Calu3 (cell line): ENCODE measurements at regions of chr6 and their contacts with region 1.

Region 1: GRCh38 chr6:77740380-77740779 is 87.5 kb downstream of the MEI4 start:
- DNase-seq: no peak
- H3K4me3 Mint-ChIP-seq: no peak overlapping the region
- H3K27ac Mint-ChIP-seq: no peak overlapping the region
- H3K4me1 Mint-ChIP-seq: no peaks in the 10 kb centered on the region
- H3K27me3 Mint-ChIP-seq: no peaks in the 10 kb centered on the region
- CTCF ChIP-seq: peak; percentile 31

Region 2: GRCh38 chr6:77796824-77797809 is 56.7 kb after region 1 on chr6:
- CTCF ChIA-PET with region 1: no interaction called
- intact Hi-C with region 1: no loop called
- DNase-seq: no peak
- H3K4me3 Mint-ChIP-seq: no peak overlapping the region
- H3K27ac Mint-ChIP-seq: no peak overlapping the region
- H3K4me1 Mint-ChIP-seq: no peaks in the 10 kb centered on the region
- H3K27me3 Mint-ChIP-seq: no peaks in the 10 kb centered on the region
- CTCF ChIP-seq: no peak

Region 3: DNA sequence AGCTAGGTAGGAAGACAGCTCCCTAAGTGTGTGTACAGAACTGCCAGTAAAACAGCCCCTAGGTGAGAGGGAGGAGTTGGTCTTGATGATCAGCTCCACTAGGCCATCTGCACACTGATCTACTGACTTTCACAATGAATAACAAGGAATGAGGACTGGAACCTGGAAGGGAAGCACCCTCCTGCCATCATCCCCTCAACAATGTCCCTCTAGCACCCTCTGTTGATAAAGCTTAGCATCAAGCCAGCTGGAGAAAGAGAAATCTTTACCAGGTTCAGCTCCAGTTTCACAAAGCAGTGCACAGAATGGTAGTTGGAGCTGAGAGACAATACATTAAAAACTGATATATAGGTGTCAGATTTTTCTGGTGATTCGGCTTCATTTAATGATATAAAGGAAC is 1069.8 kb after region 1 on chr6:
- CTCF ChIA-PET with region 1: no interaction called
- intact Hi-C with region 1: loop called (anchors 2 kb)
- DNase-seq: peak; percentile 52
- H3K4me3 Mint-ChIP-seq: no peak overlapping the region
- H3K27ac Mint-ChIP-seq: no peak overlapping the region
- H3K4me1 Mint-ChIP-seq: no peaks in the 10 kb centered on the region
- H3K27me3 Mint-ChIP-seq: no peaks in the 10 kb centered on the region
- CTCF ChIP-seq: peak; percentile 66

Region 4: DNA sequence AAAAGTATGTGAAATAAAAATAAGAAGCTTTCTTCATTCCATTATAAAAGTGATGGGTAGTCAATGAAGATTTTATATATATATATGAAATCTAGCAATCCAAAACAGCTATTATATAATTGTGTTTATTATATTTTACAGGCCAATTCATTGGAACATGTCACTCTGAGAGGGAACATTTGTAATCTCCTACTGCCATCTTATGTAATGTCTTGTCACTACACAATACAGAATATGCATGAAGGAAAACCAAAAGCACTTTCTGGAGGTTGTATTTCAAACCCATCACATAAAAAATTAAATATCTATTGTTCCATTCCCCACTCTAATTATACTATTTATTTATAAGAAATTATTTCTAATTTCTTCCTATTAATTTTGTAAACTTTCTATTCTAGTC is 1095.4 kb after region 1 on chr6:
- CTCF ChIA-PET with region 1: no interaction called
- intact Hi-C with region 1: loop called (anchors 1 kb)
- DNase-seq: no peak
- H3K4me3 Mint-ChIP-seq: no peak overlapping the region
- H3K27ac Mint-ChIP-seq: no peak overlapping the region
- H3K4me1 Mint-ChIP-seq: no peaks in the 10 kb centered on the region
- H3K27me3 Mint-ChIP-seq: no peaks in the 10 kb centered on the region
- CTCF ChIP-seq: no peak